ENCODE measurements at regions of chr10 and their contacts with region 1.

Region 1: GRCh38 chr10:68156373-68157185 is 47.3 kb downstream of the MYPN start:
- DNase-seq: peak; percentile 74
- H3K4me3 ChIP-seq: no peak overlapping the region
- H3K27ac ChIP-seq: no peak overlapping the region
- H3K4me1 ChIP-seq: peaks cover 14% of the 10 kb centered on the region
- H3K27me3 ChIP-seq: no peaks in the 10 kb centered on the region
- CTCF ChIP-seq: peak; percentile 66 to 71
- POLR2A ChIP-seq: no peak

Region 2: GRCh38 chr10:67788025-67788886 is 368.3 kb before region 1 on chr10:
- CTCF ChIA-PET with region 1: interaction called, 16 read pairs
- POLR2A ChIA-PET with region 1: no interaction called
- dilution Hi-C with region 1: no loop called
- intact Hi-C with region 1: loop called (anchors 2 kb)
- DNase-seq: peak; percentile 26
- H3K4me3 ChIP-seq: no peak overlapping the region
- H3K27ac ChIP-seq: no peak overlapping the region
- H3K4me1 ChIP-seq: no peaks in the 10 kb centered on the region
- H3K27me3 ChIP-seq: peaks cover 0 to 5% of the 10 kb centered on the region in 2 experiments
- CTCF ChIP-seq: peak; percentile 72 to 77
- POLR2A ChIP-seq: no peak

Region 3: GRCh38 chr10:68074775-68075549 is 81.6 kb before region 1 on chr10 and contains the start of gene HERC4:
- CTCF ChIA-PET with region 1: interaction called, 3 read pairs
- POLR2A ChIA-PET with region 1: no interaction called
- dilution Hi-C with region 1: no loop called
- intact Hi-C with region 1: loop called (anchors 2 kb)
- DNase-seq: peak; percentile 88
- H3K4me3 ChIP-seq: peak within 1 kb of the TSS; percentile 95 to 99 (median 96)
- H3K27ac ChIP-seq: peak within 1 kb of the TSS; percentile 95
- H3K4me1 ChIP-seq: peaks cover 32% of the 10 kb centered on the region
- H3K27me3 ChIP-seq: no peaks in the 10 kb centered on the region
- CTCF ChIP-seq: no peak
- POLR2A ChIP-seq: peak; percentile 54
- total RNA-seq, gene HERC4: 68.7 and 73.7 TPM in 2 replicates

Region 4: GRCh38 chr10:68088744-68089143 is 67.8 kb before region 1 on chr10:
- CTCF ChIA-PET with region 1: interaction called, 185 read pairs
- POLR2A ChIA-PET with region 1: no interaction called
- dilution Hi-C with region 1: no loop called
- intact Hi-C with region 1: loop called (anchors 1 kb)
- DNase-seq: no peak
- H3K4me3 ChIP-seq: no peak overlapping the region
- H3K27ac ChIP-seq: no peak overlapping the region
- H3K4me1 ChIP-seq: peaks cover 8% of the 10 kb centered on the region
- H3K27me3 ChIP-seq: no peaks in the 10 kb centered on the region
- CTCF ChIP-seq: no peak
- POLR2A ChIP-seq: no peak

Region 5: GRCh38 chr10:68135922-68136718 is 20.5 kb before region 1 on chr10:
- CTCF ChIA-PET with region 1: interaction called, 11 read pairs
- POLR2A ChIA-PET with region 1: no interaction called
- dilution Hi-C with region 1: no loop called
- intact Hi-C with region 1: loop called (anchors 1 kb)
- DNase-seq: peak; percentile 92
- H3K4me3 ChIP-seq: peak overlapping the region in 1 of 3 experiments; percentile 28
- H3K27ac ChIP-seq: peak overlapping the region; percentile 96
- H3K4me1 ChIP-seq: peaks cover 35% of the 10 kb centered on the region
- H3K27me3 ChIP-seq: no peaks in the 10 kb centered on the region
- CTCF ChIP-seq: no peak
- POLR2A ChIP-seq: peak; percentile 39

Region 6: DNA sequence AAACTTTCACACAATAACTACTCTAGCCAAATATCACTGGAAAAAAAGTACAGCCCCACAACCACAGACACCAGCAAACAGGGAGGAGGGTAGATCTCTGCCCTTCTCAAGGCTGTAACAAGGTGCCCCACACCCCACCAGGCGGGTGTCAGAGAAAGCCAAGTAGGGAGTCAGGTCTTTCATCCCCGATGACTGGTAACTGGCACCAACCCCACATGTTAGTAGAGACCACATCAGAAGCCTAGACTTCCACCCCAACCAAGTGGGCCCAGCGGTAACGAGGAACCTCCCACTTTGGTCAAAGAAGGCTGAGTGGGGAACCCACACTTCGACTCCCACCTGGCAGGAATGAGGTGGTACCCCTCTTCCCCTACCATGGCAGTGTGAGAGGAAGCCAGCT is 266.9 kb after region 1 on chr10:
- CTCF ChIA-PET with region 1: no interaction called
- POLR2A ChIA-PET with region 1: no interaction called
- dilution Hi-C with region 1: no loop called
- intact Hi-C with region 1: no loop called
- DNase-seq: peak; percentile 17
- H3K4me3 ChIP-seq: no peak overlapping the region
- H3K27ac ChIP-seq: no peak overlapping the region
- H3K4me1 ChIP-seq: no peaks in the 10 kb centered on the region
- H3K27me3 ChIP-seq: no peaks in the 10 kb centered on the region
- CTCF ChIP-seq: no peak
- POLR2A ChIP-seq: no peak

Measured in endothelial cell of umbilical vein (primary cell).